ENCODE measurements at regions of chr4 and their contacts with region 1.

Region 1: DNA sequence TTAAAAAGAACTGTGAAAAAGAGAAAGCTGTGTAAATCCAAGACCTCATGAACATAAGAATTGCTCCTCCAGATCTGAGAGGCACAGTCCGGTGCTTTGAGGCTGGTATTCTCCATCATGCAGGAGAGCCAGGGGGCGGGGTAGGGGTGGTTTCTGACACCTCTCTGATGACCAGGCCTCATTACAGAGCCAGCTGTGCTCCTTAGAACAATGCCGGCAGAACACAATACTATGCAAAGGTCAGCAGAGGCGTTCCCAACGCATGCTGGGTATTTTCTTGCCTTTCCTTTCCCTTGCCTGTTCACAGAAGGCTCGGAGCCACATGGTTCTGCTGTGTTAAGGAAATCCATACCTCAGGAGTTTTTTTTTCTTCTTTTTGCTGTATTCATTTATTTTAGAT is 91.2 kb upstream of the SOD3 start:
- DNase-seq: no peak
- ATAC-seq: no peak
- H3K4me3 ChIP-seq: no peak overlapping the region
- H3K4me1 ChIP-seq: no peaks in the 10 kb centered on the region
- CTCF ChIP-seq: no peak

Region 2: GRCh38 chr4:24488399-24489164 is 215.6 kb before region 1 on chr4:
- intact Hi-C with region 1: loop called in 1 of 2 experiments (anchors 10 kb)
- DNase-seq: peak; percentile 67 to 94 (median 85)
- ATAC-seq: peak; percentile 91
- H3K4me3 ChIP-seq: no peak overlapping the region
- H3K4me1 ChIP-seq: no peaks in the 10 kb centered on the region
- CTCF ChIP-seq: peak; percentile 71